GM12878 (cell line): ENCODE measurements at regions of chr22 and their contacts with region 1.

Region 1: DNA sequence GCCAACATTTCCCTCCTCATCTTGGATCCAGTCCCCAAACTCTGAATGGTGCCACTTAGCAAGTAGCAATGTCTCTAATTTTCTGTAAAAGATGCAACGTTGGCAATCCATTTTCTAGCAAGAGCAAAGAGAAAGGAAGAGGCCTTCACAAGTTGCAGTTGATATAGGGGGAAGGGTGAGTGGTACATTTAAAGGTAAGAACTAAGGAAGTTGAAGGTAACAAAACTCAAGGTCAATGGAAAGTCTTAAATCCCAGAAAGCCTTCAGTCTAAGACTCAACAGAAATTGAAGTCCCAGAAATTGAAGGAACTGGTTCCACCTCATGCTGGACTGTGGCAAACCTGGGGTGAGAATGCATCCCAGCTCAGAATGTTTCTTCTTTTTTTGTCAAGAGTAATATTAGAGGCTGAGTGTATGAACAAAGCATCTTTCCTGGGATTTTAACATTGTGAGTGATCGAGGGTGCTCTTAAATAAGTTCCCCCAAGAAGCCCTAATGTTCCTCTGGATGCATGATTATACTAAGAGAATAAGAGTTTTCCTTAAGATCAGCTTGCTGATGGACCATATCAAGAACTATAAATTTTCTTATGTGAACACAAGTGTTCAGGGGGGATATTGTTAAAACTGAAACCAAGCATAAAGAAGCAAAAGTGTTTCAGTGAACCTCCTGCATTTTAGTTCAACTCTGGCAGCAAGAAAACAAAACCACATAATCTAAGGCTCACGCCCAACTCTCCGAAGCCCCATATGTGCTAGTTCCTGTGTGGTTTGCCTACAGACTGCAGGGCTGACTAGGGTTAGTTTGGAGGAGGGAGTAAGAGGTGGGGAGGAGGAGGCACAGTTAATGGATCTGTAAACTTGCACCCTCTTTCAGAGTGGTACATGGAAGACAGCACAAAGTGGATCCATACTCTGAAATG is at the start of gene GRAP2:
- DNase-seq: peak; percentile 94
- ATAC-seq: peak; percentile 84
- H3K4me3 ChIP-seq: peak within 1 kb of the TSS; percentile 89
- H3K27ac ChIP-seq: peak within 1 kb of the TSS; percentile 87
- H3K4me1 ChIP-seq: peaks cover 24% of the 10 kb centered on the region
- H3K27me3 ChIP-seq: no peaks in the 10 kb centered on the region
- CTCF ChIP-seq: no peak
- EP300 ChIP-seq: peak; percentile 30 to 49; a peak in 1 of 4 replicates
- POLR2A ChIP-seq: peak; percentile 73
- RAD21 ChIP-seq: 0 out of 2 replicates have a peak, but pooled peaks have one; percentile 5
- polyA plus RNA-seq, gene GRAP2: 3.3 to 5.4 TPM

Region 2: DNA sequence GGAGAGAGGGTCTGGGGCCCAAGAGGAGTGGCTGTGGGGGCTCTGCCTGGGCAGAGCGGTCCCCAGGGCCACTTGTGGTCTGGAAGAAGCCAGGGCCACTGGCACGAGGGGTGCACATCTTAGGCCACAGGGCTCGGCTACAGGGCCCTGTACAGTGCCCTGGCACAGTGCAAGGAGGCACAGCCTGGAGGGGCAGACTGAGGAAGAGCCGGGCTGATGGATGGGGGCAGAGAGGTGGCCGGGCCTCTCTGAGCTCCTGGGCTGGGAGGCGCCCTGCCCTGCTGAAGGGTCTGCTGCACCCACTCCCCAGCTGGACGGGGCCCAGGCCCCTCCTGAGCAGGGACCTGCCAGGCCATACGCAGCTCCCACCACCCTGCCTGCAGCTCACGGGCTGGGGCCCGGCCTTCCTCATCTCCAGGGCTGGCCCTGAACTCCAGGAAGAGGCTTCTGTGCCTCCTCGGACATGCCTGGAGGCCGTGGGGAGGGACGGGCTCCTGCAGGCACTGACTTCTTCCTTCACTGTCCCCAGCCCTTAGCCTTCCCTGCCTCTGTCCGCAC is 206.5 kb before region 1 on chr22:
- CTCF ChIA-PET with region 1: no interaction called
- POLR2A ChIA-PET with region 1: no interaction called
- RAD21 ChIA-PET with region 1: no interaction called
- SMC1A ChIA-PET with region 1: no interaction called
- in situ Hi-C with region 1: no loop called
- intact Hi-C with region 1: no loop called
- DNase-seq: no peak
- ATAC-seq: peak; percentile 36; the same call in 1 of the 3 replicates
- H3K4me3 ChIP-seq: no peak overlapping the region
- H3K27ac ChIP-seq: no peak overlapping the region
- H3K4me1 ChIP-seq: no peaks in the 10 kb centered on the region
- H3K27me3 ChIP-seq: no peaks in the 10 kb centered on the region; a peak in 3 of 4 replicates
- CTCF ChIP-seq: no peak
- EP300 ChIP-seq: no peak
- POLR2A ChIP-seq: no peak
- RAD21 ChIP-seq: no peak

Region 3: DNA sequence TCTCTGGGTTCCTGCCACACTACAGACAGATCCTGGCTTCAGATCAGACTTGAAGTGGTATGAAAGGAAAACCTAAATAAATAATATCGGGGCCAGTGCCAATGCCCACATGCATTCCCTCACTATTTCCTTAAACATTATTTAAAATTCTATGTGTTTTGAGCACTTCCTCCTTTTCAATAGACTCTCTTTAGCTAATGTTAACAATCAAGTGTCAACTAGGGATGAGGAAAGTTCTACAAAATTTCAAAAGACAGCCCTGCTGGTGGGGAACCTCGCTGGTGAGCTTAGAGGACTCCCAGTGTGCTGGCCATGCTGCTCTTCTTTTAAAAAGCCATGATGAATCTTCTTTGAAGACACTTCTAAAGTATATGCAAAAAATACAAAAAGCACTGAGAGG is 94.5 kb before region 1 on chr22:
- CTCF ChIA-PET with region 1: no interaction called
- POLR2A ChIA-PET with region 1: no interaction called
- RAD21 ChIA-PET with region 1: no interaction called
- SMC1A ChIA-PET with region 1: no interaction called
- in situ Hi-C with region 1: no loop called
- intact Hi-C with region 1: no loop called
- DNase-seq: no peak
- ATAC-seq: no peak
- H3K4me3 ChIP-seq: no peak overlapping the region
- H3K27ac ChIP-seq: no peak overlapping the region
- H3K4me1 ChIP-seq: peaks cover 11% of the 10 kb centered on the region
- H3K27me3 ChIP-seq: no peaks in the 10 kb centered on the region
- CTCF ChIP-seq: no peak
- EP300 ChIP-seq: no peak
- POLR2A ChIP-seq: no peak
- RAD21 ChIP-seq: no peak

Region 4: DNA sequence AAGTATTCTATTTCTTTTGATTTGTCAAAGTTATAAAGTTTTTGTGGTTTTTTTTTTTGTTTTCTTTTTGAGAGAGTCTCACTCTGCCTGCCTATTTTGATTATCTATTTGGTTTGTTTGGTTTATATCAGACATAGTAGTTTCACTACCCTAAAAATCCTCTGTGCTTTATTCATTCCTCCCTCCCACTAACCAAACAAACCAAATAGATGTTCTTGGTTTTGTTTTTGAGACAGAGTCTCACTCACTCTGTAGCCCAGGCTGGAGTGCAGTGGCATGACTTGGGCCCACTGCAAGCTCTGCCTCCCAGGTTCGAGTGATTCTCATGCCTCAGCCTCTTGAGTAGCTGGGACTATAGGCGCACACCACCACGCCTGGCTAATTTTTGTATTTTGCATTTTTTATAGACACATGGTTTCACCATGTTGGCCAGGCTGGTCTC is 74.9 kb before region 1 on chr22:
- CTCF ChIA-PET with region 1: no interaction called
- POLR2A ChIA-PET with region 1: interaction called, 4 read pairs
- RAD21 ChIA-PET with region 1: no interaction called
- SMC1A ChIA-PET with region 1: no interaction called
- in situ Hi-C with region 1: no loop called
- intact Hi-C with region 1: loop called (anchors 2 kb)
- DNase-seq: peak; percentile 66
- ATAC-seq: peak; percentile 99
- H3K4me3 ChIP-seq: no peak overlapping the region
- H3K27ac ChIP-seq: peak overlapping the region; percentile 73
- H3K4me1 ChIP-seq: peaks cover 9% of the 10 kb centered on the region
- H3K27me3 ChIP-seq: no peaks in the 10 kb centered on the region
- CTCF ChIP-seq: no peak
- EP300 ChIP-seq: peak in 1 of 2 experiments; percentile 76; a peak in 3 of 4 replicates
- POLR2A ChIP-seq: no peak
- RAD21 ChIP-seq: no peak

Region 5: DNA sequence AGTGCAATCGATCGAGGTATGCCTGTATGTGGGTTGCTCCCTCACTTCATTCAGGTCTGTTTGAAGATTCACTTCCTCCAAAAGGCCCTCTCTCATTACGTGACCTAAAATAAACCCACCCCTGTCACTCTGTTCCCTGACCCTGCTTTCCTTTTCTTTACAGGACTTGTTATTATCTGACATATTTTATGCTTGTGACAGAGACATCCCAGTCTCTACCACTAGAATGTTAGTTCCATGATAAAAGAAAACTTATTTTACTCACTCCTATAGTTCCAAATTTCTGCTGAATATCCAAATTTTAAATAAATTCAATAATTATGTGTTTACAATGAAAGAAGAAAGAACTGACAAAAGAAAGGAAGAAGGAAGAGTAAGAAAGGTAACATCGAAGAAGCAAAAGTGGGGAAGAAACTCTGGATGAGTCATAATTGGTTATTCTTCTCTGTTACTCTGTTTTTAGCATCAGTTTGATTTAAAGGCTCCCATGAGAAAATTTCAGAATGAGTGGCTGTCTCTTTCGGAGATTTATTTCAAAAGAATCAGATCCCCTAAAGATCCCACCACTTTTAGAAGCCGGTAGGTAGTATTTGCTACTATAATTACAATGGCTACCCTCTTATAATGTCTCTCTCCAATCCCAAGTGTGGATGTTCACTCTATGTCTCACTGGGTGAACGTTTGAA is 40.5 kb before region 1 on chr22:
- CTCF ChIA-PET with region 1: interaction called, 4 read pairs
- POLR2A ChIA-PET with region 1: interaction called, 3 read pairs
- RAD21 ChIA-PET with region 1: interaction called, 7 read pairs
- SMC1A ChIA-PET with region 1: interaction called, 8 read pairs
- in situ Hi-C with region 1: no loop called
- intact Hi-C with region 1: loop called (anchors 1 kb)
- DNase-seq: peak; percentile 73
- ATAC-seq: peak; percentile 91
- H3K4me3 ChIP-seq: peak overlapping the region; percentile 44; the same call in 1 of the 2 replicates
- H3K27ac ChIP-seq: peak overlapping the region; percentile 85
- H3K4me1 ChIP-seq: peaks cover 19% of the 10 kb centered on the region
- H3K27me3 ChIP-seq: no peaks in the 10 kb centered on the region
- CTCF ChIP-seq: no peak
- EP300 ChIP-seq: peak; percentile 42 to 50; a peak in 1 of 4 replicates
- POLR2A ChIP-seq: no peak
- RAD21 ChIP-seq: no peak

Region 6: GRCh38 chr22:39868741-39869140 is 31.8 kb before region 1 on chr22:
- CTCF ChIA-PET with region 1: interaction called, 3 read pairs
- POLR2A ChIA-PET with region 1: interaction called, 4 read pairs
- RAD21 ChIA-PET with region 1: interaction called, 5 read pairs
- SMC1A ChIA-PET with region 1: interaction called, 29 read pairs
- in situ Hi-C with region 1: no loop called
- intact Hi-C with region 1: loop called (anchors 2 kb)
- DNase-seq: peak; percentile 58
- ATAC-seq: peak; percentile 78
- H3K4me3 ChIP-seq: peak overlapping the region; percentile 7; the same call in 1 of the 2 replicates
- H3K27ac ChIP-seq: peak overlapping the region; percentile 50; the same call in 1 of the 2 replicates
- H3K4me1 ChIP-seq: peaks cover 18% of the 10 kb centered on the region; the same call in 1 of the 2 replicates
- H3K27me3 ChIP-seq: no peaks in the 10 kb centered on the region
- CTCF ChIP-seq: no peak
- EP300 ChIP-seq: no peak
- POLR2A ChIP-seq: no peak
- RAD21 ChIP-seq: no peak

Region 7: GRCh38 chr22:39917776-39918495 is 17.4 kb after region 1 on chr22:
- CTCF ChIA-PET with region 1: interaction called, 4 read pairs
- POLR2A ChIA-PET with region 1: interaction called, 5 read pairs
- RAD21 ChIA-PET with region 1: interaction called, 91 read pairs
- SMC1A ChIA-PET with region 1: interaction called, 108 read pairs
- in situ Hi-C with region 1: no loop called
- intact Hi-C with region 1: no loop called
- DNase-seq: no peak
- ATAC-seq: no peak
- H3K4me3 ChIP-seq: no peak overlapping the region
- H3K27ac ChIP-seq: no peak overlapping the region
- H3K4me1 ChIP-seq: peaks cover 9% of the 10 kb centered on the region; the same call in 1 of the 2 replicates
- H3K27me3 ChIP-seq: no peaks in the 10 kb centered on the region
- CTCF ChIP-seq: no peak
- EP300 ChIP-seq: no peak
- POLR2A ChIP-seq: no peak
- RAD21 ChIP-seq: no peak

Region 8: GRCh38 chr22:39946503-39947219 is 46.1 kb after region 1 on chr22:
- CTCF ChIA-PET with region 1: interaction called, 4 read pairs
- POLR2A ChIA-PET with region 1: no interaction called
- RAD21 ChIA-PET with region 1: interaction called, 14 read pairs
- SMC1A ChIA-PET with region 1: interaction called, 7 read pairs
- in situ Hi-C with region 1: no loop called
- intact Hi-C with region 1: no loop called
- DNase-seq: no peak
- ATAC-seq: peak; percentile 54
- H3K4me3 ChIP-seq: no peak overlapping the region
- H3K27ac ChIP-seq: no peak overlapping the region
- H3K4me1 ChIP-seq: peaks cover 46% of the 10 kb centered on the region
- H3K27me3 ChIP-seq: no peaks in the 10 kb centered on the region
- CTCF ChIP-seq: no peak
- EP300 ChIP-seq: no peak
- POLR2A ChIP-seq: no peak
- RAD21 ChIP-seq: no peak